Activated B cell treated with CpG ODN at 0.5 μM for 24 hours (primary cell): ENCODE measurements at regions of chr5 and their contacts with region 1.

Region 1: GRCh38 chr5:110625376-110625999 is 101.0 kb downstream of the TMEM232 start:
- DNase-seq: no peak
- ATAC-seq: no peak
- H3K4me3 Mint-ChIP-seq: no peak overlapping the region
- H3K27ac Mint-ChIP-seq: no peak overlapping the region
- H3K4me1 Mint-ChIP-seq: no peaks in the 10 kb centered on the region
- H3K27me3 Mint-ChIP-seq: no peaks in the 10 kb centered on the region
- CTCF ChIP-seq: peak; percentile 77

Region 2: GRCh38 chr5:109589986-109590385 is 1035.5 kb before region 1 on chr5:
- CTCF ChIA-PET with region 1: no interaction called
- POLR2A ChIA-PET with region 1: no interaction called
- intact Hi-C with region 1: loop called (anchors 1 kb)
- DNase-seq: no peak
- ATAC-seq: no peak
- H3K4me3 Mint-ChIP-seq: no peak overlapping the region
- H3K27ac Mint-ChIP-seq: no peak overlapping the region
- H3K4me1 Mint-ChIP-seq: no peaks in the 10 kb centered on the region
- H3K27me3 Mint-ChIP-seq: no peaks in the 10 kb centered on the region
- CTCF ChIP-seq: no peak

Region 3: GRCh38 chr5:109865637-109866036 is 759.9 kb before region 1 on chr5:
- CTCF ChIA-PET with region 1: no interaction called
- POLR2A ChIA-PET with region 1: no interaction called
- intact Hi-C with region 1: loop called (anchors 10 kb)
- DNase-seq: no peak
- ATAC-seq: no peak
- H3K4me3 Mint-ChIP-seq: no peak overlapping the region
- H3K27ac Mint-ChIP-seq: no peak overlapping the region
- H3K4me1 Mint-ChIP-seq: no peaks in the 10 kb centered on the region
- H3K27me3 Mint-ChIP-seq: no peaks in the 10 kb centered on the region
- CTCF ChIP-seq: no peak

Region 4: GRCh38 chr5:111028865-111029264 is 403.4 kb after region 1 on chr5:
- CTCF ChIA-PET with region 1: no interaction called
- POLR2A ChIA-PET with region 1: no interaction called
- intact Hi-C with region 1: no loop called
- DNase-seq: no peak
- ATAC-seq: no peak
- H3K4me3 Mint-ChIP-seq: no peak overlapping the region
- H3K27ac Mint-ChIP-seq: no peak overlapping the region
- H3K4me1 Mint-ChIP-seq: no peaks in the 10 kb centered on the region
- H3K27me3 Mint-ChIP-seq: peaks cover 3% of the 10 kb centered on the region
- CTCF ChIP-seq: no peak